ENCODE measurements at regions of chr9 and their contacts with region 1.

Region 1: DNA sequence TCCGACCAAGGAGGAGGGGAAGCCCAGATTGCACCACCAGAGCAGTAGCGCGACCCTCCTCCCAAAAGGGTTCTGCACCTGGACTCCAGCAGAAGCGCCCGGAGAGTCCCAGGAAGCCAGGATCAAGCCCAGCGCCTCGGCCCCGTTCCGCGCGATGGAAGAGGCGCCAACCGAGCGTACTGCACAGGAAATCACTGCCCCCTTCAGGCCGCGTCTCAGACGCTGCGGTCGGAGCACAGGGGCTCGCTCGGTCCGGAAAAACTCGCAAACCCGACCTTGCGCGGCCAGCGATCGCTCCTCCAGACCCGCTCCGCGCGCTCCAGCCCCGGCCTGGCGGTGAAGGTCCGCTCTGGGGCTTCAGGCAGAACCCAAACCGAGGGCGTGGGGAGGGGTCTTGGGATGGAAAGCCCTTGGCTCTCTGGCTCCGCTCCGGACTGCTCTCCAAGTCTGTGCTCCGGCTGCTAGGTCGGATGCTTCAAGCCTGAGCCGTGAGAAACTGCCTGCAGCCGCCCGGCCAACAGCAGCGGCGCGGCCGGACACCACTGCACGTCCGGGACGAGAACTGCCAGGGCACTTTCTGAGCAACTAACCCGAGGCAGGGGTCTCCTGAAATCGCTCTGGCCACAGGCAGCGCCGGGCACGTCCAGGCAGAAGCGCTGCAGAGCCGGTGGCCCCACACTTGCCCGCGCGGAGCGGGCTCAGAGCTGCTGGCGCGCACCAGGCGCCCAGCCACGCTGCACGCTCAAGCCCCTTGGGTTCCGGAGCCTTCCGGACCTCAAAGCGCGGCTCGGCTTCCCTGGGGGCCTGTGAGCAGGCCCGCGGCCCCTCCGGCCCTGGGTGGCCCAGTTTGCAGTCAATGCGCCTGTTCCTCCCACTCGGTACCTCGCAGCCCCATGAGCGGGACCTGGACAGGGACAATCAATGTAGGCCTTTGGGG is 1.3 kb downstream of the GABBR2 start:
- DNase-seq: peak; percentile 50
- H3K4me3 Mint-ChIP-seq: no peak overlapping the region
- H3K27ac Mint-ChIP-seq: no peak overlapping the region
- H3K4me1 Mint-ChIP-seq: peaks cover 1% of the 10 kb centered on the region
- H3K27me3 Mint-ChIP-seq: peaks cover 51% of the 10 kb centered on the region

Region 2: GRCh38 chr9:98287383-98287782 is 420.1 kb before region 1 on chr9:
- CTCF ChIA-PET with region 1: no interaction called
- POLR2A ChIA-PET with region 1: no interaction called
- intact Hi-C with region 1: no loop called
- DNase-seq: no peak
- H3K4me3 Mint-ChIP-seq: no peak overlapping the region
- H3K27ac Mint-ChIP-seq: no peak overlapping the region
- H3K4me1 Mint-ChIP-seq: no peaks in the 10 kb centered on the region
- H3K27me3 Mint-ChIP-seq: peaks cover 1% of the 10 kb centered on the region

Region 3: DNA sequence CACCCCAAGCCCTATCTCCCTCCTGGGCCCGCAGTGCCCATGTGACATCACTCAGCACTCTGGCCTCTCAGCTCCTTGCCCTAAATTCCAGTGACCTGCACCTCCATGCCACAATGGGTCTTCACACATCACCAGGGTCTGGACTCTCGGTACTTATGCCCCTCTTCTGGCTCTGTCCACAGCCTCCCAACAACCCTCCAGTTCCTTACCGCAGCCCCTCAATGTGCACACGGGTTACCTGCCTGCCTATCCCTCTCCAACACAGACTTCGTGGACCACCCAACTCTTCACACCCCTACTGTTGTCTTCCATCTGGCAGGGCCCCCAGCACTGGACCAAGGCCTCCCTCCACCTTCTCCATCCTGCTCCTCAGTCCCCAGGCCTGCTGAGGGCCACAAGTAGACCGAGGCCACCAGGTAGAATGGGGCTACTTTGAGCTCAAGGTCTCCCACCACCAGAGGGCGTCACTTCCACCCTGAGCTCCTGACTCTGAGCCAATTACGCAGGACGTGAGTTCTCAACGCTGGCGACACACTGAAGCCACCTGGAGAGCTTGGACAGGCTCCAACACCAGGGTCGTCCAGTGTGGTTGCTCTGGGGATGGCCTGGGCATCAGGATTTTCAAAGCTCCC is 170.8 kb before region 1 on chr9:
- CTCF ChIA-PET with region 1: interaction called, 3 read pairs
- POLR2A ChIA-PET with region 1: no interaction called
- intact Hi-C with region 1: loop called (anchors 5 kb)
- DNase-seq: peak; percentile 56
- H3K4me3 Mint-ChIP-seq: no peak overlapping the region
- H3K27ac Mint-ChIP-seq: no peak overlapping the region
- H3K4me1 Mint-ChIP-seq: no peaks in the 10 kb centered on the region
- H3K27me3 Mint-ChIP-seq: peaks cover 2% of the 10 kb centered on the region

Region 4: DNA sequence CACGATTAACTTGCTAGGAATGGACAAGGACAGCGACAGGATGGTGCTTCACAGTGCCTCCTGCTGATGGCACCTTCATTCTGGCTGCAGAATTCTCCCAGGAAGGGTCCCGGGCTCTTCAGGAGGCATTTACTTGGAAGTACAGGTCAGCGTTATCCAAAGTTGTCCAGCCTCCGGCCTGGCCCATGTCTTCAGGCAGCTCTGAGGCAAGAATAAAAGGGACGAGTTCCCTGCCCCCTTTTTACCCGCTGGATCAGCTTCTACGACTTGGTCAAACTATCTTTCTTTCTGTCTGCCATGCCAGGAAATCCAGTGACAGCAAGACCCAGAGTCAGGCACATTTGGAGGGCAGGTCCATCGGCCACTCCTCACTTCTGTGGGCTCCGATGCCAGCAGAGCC is 24.7 kb after region 1 on chr9:
- CTCF ChIA-PET with region 1: no interaction called
- POLR2A ChIA-PET with region 1: no interaction called
- intact Hi-C with region 1: no loop called
- DNase-seq: no peak
- H3K4me3 Mint-ChIP-seq: no peak overlapping the region
- H3K27ac Mint-ChIP-seq: no peak overlapping the region
- H3K4me1 Mint-ChIP-seq: no peaks in the 10 kb centered on the region
- H3K27me3 Mint-ChIP-seq: peaks cover 1% of the 10 kb centered on the region

Region 5: GRCh38 chr9:98742325-98743280 is 35.2 kb after region 1 on chr9:
- CTCF ChIA-PET with region 1: no interaction called
- POLR2A ChIA-PET with region 1: no interaction called
- intact Hi-C with region 1: no loop called
- DNase-seq: no peak
- H3K4me3 Mint-ChIP-seq: no peak overlapping the region
- H3K27ac Mint-ChIP-seq: no peak overlapping the region
- H3K4me1 Mint-ChIP-seq: no peaks in the 10 kb centered on the region
- H3K27me3 Mint-ChIP-seq: no peaks in the 10 kb centered on the region

Measured in activated CD4-positive, alpha-beta memory T cell treated with anti-CD3 and anti-CD28 coated beads for 36 hours (primary cell).